Activated CD8-positive, alpha-beta T cell treated with anti-CD3 and anti-CD28 coated beads, Interleukin-2, amount 10 ng/mL, durations not matched to agents 7 days and 5 days (primary cell): ENCODE measurements at regions of chr16 and their contacts with region 1.

Region 1: DNA sequence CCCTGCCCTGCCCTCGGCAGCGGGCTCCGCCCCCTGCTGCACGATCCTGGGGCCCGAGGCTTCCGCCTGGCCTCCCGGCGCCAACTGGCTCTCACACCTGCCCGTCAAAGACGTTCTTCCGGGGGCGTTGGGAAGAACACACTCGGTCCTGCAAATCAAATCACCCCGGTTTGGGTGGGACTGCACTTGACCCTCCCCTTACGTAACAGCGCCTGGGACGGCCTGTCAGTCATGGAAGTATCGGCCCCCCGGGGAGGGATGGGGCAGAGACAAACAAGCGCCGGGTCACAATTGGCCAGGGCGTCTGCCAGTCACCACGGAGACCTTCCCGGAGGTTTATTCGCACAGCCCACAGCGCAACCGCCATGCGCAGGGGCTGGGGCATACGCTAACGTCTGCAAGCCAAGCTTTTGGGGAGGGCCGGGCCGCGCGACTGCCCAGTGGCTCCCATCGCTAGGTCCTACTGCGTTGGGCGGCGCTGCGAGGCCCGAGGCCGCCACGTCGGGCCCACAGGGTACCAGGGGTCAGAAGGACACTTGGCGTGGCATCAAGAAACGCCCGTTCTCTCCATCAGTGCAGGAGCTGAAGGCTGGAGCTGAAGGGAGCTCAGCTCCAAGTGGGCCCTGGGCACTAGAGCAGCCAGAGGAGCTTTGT is 388 bp upstream of the AKTIP start:
- DNase-seq: peak; percentile 100
- ATAC-seq: peak; percentile 94
- H3K4me3 Mint-ChIP-seq: peak overlapping the region; percentile 85
- H3K27ac Mint-ChIP-seq: peak overlapping the region; percentile 91
- H3K4me1 Mint-ChIP-seq: peaks cover 52% of the 10 kb centered on the region
- H3K27me3 Mint-ChIP-seq: no peaks in the 10 kb centered on the region

Region 2: DNA sequence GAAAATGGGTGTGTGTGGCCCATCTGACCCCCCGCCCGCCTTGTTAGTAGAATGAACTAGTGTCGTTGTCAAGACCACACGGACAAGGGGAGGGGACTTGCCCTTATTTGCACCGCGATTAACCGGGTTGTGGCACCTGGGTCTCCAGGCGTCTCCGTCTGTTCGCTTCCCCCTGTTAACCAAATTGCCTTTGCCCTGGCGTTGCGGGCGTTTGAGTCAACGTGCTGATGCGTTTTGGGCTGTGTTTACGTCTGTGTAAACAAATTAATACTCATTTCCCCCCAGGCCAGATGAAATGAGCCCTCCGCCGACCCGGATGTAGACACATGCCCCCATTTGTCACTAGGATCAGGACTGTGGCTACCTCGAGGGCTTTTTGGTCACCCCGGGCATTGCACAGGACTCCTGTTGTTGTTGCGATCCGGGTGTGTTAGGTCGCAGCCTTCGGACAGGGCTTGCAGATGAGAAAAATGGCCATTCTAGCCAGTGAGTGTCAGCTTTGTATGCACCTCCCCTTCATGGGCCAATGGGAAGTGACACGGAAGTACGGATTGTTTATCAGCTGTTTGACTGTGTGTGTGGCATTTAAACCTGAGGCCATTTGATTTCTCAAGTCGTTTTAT is 68.2 kb before region 1 on chr16:
- CTCF ChIA-PET with region 1: interaction called, 4 read pairs
- POLR2A ChIA-PET with region 1: interaction called, 48 read pairs
- DNase-seq: peak; percentile 81
- ATAC-seq: peak; percentile 77
- H3K4me3 Mint-ChIP-seq: peak overlapping the region; percentile 96
- H3K27ac Mint-ChIP-seq: peak overlapping the region; percentile 95
- H3K4me1 Mint-ChIP-seq: peaks cover 45% of the 10 kb centered on the region
- H3K27me3 Mint-ChIP-seq: no peaks in the 10 kb centered on the region

Region 3: GRCh38 chr16:53457670-53458069 is 45.7 kb before region 1 on chr16:
- CTCF ChIA-PET with region 1: interaction called, 3 read pairs
- POLR2A ChIA-PET with region 1: interaction called, 36 read pairs
- DNase-seq: peak; percentile 91
- ATAC-seq: peak; percentile 86
- H3K4me3 Mint-ChIP-seq: peak overlapping the region; percentile 78
- H3K27ac Mint-ChIP-seq: peak overlapping the region; percentile 94
- H3K4me1 Mint-ChIP-seq: peaks cover 87% of the 10 kb centered on the region
- H3K27me3 Mint-ChIP-seq: no peaks in the 10 kb centered on the region

Region 4: DNA sequence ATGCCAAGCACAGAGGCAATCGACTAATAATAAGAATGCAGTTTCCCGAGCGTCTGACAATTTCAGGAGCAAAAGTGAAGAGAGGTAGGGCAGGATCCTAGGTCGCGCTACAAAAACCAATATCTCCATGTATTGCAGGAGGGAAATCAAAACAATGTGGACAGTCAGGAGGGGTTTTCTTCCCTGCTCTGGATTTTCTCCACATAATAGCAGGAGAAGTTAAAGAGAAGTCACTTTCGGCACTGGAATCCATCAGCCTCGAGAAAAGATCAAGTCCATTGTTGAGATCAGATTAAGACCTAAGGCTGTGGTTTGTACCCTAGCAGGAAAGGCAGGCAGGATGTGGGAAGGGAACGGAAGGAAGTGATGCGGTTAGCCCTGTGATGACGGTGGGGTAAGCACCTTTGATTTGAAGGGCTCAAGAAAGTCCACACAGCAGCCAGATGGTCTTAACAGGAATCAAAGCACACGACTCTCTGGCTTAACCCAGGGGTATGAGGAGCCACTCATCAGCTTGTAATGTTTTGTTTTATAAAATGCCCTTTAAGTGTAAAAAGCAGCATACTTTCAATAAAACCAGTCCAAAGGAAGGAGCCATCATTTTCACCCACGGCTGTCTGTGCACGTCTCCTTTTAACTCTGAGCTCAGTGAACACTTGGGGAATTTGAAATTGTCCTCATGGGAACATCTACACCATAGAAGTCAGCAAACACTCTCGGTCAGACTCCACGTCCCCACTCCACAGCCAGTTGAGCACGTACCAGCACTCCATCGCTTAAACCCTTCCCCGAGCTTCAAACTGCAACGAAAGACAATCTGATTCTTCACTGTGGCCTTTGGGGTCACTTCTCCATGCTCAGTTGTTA is 15.4 kb after region 1 on chr16:
- CTCF ChIA-PET with region 1: interaction called, 4 read pairs
- POLR2A ChIA-PET with region 1: interaction called, 13 read pairs
- DNase-seq: peak; percentile 93
- ATAC-seq: peak; percentile 90
- H3K4me3 Mint-ChIP-seq: peak overlapping the region; percentile 75
- H3K27ac Mint-ChIP-seq: peak overlapping the region; percentile 94
- H3K4me1 Mint-ChIP-seq: peaks cover 62% of the 10 kb centered on the region
- H3K27me3 Mint-ChIP-seq: no peaks in the 10 kb centered on the region

Region 5: DNA sequence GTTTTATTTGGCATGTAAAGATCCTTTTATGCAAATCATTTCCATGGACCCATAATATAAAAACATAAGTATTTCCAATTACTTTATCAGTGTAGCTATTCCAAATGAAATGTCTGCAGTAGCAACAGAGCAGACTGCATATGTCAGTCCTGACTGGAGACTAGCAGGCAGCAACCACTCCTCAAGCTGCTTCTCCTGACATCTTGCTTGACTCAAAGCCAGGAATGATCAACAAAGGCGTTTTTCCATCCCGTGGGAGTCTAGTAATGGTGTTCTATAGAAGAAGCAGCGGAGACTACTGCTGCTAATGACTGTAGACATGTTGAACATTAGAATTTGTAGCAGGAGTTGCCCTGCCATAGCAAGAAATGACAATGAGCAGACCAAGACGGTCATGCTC is 72.8 kb after region 1 on chr16:
- CTCF ChIA-PET with region 1: no interaction called
- POLR2A ChIA-PET with region 1: no interaction called
- DNase-seq: no peak
- ATAC-seq: no peak
- H3K4me3 Mint-ChIP-seq: no peak overlapping the region
- H3K27ac Mint-ChIP-seq: no peak overlapping the region
- H3K4me1 Mint-ChIP-seq: no peaks in the 10 kb centered on the region
- H3K27me3 Mint-ChIP-seq: no peaks in the 10 kb centered on the region